Activated naive CD4-positive, alpha-beta T cell treated with anti-CD3 and anti-CD28 coated beads for 36 hours (primary cell): ENCODE measurements at regions of chr18 and their contacts with region 1.

Region 1: DNA sequence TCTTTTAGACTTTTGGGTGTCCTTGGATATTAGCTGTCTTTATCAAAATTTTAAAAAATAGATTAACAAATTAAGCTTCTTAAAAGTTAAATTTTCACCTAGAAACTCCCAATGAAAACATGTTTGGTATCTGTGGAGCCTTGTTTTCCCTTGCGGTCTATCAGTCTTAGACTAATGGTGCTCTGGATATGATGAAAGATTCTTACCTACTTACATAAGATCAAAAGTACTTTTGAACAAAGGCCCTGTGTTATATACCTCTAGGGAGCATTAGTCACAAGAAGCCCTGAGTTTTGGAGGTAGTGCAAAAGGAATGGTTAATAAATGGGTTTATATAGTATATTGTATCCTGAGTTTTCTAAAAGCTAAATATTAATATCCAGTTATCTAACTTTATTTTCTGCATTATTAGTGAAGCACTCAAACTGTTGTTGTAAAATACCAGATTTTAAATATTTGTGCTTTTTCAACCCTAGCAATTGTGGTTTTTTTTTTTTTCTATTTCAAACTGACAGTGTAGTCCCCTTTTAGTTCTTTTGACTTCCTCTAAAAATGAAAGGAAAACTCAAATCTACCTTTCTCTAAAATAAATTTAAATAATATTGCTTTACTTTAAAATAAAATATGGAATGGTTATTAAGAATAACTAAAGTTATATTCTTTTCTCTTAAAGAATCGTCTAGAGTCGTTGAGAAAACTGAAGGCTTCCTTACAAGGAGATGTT is 18.1 kb downstream of the NDC80 start:
- DNase-seq: no peak
- H3K4me3 Mint-ChIP-seq: peak overlapping the region; percentile 55
- H3K27ac Mint-ChIP-seq: peak overlapping the region; percentile 93
- H3K4me1 Mint-ChIP-seq: peaks cover 59% of the 10 kb centered on the region
- H3K27me3 Mint-ChIP-seq: no peaks in the 10 kb centered on the region

Region 2: GRCh38 chr18:2606335-2606734 is 16.8 kb after region 1 on chr18:
- CTCF ChIA-PET with region 1: interaction called, 11 read pairs
- intact Hi-C with region 1: loop called (anchors 1 kb)
- DNase-seq: no peak
- H3K4me3 Mint-ChIP-seq: no peak overlapping the region
- H3K27ac Mint-ChIP-seq: peak overlapping the region; percentile 79
- H3K4me1 Mint-ChIP-seq: peaks cover 49% of the 10 kb centered on the region
- H3K27me3 Mint-ChIP-seq: no peaks in the 10 kb centered on the region

Region 3: GRCh38 chr18:2636126-2636631 is 46.7 kb after region 1 on chr18:
- CTCF ChIA-PET with region 1: no interaction called
- intact Hi-C with region 1: loop called (anchors 1 kb)
- DNase-seq: no peak
- H3K4me3 Mint-ChIP-seq: peak overlapping the region; percentile 64
- H3K27ac Mint-ChIP-seq: peak overlapping the region; percentile 85
- H3K4me1 Mint-ChIP-seq: peaks cover 68% of the 10 kb centered on the region
- H3K27me3 Mint-ChIP-seq: no peaks in the 10 kb centered on the region